Calu3 (cell line): ENCODE measurements at regions of chr13 and their contacts with region 1.

Region 1: GRCh38 chr13:45047394-45048310 is 58.3 kb downstream of the GPALPP1 start:
- DNase-seq: peak; percentile 72
- H3K4me3 Mint-ChIP-seq: peak overlapping the region; percentile 50
- H3K27ac Mint-ChIP-seq: no peak overlapping the region
- H3K4me1 Mint-ChIP-seq: peaks cover 6% of the 10 kb centered on the region
- H3K27me3 Mint-ChIP-seq: no peaks in the 10 kb centered on the region
- CTCF ChIP-seq: peak; percentile 56

Region 2: GRCh38 chr13:44988973-44989817 is 58.5 kb before region 1 on chr13 and contains the starts of genes GPALPP1 and NUFIP1:
- CTCF ChIA-PET with region 1: no interaction called
- intact Hi-C with region 1: no loop called
- DNase-seq: peak; percentile 83
- H3K4me3 Mint-ChIP-seq: peak within 1 kb of the TSS; percentile 99
- H3K27ac Mint-ChIP-seq: peak within 1 kb of the TSS; percentile 99
- H3K4me1 Mint-ChIP-seq: peaks cover 21% of the 10 kb centered on the region
- H3K27me3 Mint-ChIP-seq: no peaks in the 10 kb centered on the region
- CTCF ChIP-seq: no peak
- total RNA-seq, gene GPALPP1: 21.7 and 23.1 TPM in 2 replicates
- total RNA-seq, gene NUFIP1: 6.6 TPM in 2 replicates

Region 3: DNA sequence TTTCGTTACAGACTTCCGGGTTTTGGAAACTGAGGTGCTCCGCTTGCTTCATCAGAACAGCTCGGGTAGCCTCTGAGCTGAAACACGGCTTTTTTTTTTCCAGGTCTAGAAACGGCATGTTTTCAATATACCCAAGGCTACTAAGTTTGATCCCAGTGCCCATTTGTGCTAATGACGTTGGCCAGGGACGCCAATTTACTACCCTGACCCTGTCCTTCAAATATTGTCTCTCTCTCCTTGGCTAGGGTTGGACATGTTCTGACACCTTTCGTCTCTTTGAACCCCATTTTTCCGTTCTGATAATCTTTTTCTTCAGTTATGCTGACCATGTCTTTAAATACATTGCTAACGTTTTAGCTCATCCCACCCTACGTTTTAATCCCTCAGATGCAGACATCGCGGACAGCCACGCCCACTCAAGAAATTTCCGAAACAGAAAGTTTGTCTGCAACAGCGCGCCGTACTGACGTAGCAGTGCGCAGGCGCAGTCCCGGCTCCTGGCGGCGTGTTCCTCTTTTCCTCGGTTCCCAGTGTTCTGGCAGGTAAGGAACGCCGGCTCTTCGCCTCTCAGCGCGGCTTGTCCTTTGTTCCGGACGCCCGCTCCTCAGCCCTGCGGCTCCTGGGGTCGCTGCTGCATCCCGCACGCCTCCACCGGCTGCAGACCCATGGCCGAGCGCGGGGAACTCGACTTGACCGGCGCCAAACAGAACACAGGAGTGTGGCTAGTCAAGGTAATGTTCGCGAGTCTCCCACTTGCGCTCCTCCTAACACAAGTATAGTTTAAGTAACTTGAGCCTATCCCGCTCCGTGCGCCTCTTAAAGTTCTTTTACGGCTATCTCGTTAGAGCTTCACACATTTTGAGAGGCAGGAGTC is 72.6 kb after region 1 on chr13 and contains the start of gene GTF2F2:
- CTCF ChIA-PET with region 1: no interaction called
- intact Hi-C with region 1: loop called (anchors 5 kb)
- DNase-seq: peak; percentile 86
- H3K4me3 Mint-ChIP-seq: no peak within 1 kb of the TSS
- H3K27ac Mint-ChIP-seq: no peak within 1 kb of the TSS
- H3K4me1 Mint-ChIP-seq: no peaks in the 10 kb centered on the region
- H3K27me3 Mint-ChIP-seq: no peaks in the 10 kb centered on the region
- CTCF ChIP-seq: no peak
- total RNA-seq, gene GTF2F2: 21.1 and 23.9 TPM in 2 replicates

Region 4: DNA sequence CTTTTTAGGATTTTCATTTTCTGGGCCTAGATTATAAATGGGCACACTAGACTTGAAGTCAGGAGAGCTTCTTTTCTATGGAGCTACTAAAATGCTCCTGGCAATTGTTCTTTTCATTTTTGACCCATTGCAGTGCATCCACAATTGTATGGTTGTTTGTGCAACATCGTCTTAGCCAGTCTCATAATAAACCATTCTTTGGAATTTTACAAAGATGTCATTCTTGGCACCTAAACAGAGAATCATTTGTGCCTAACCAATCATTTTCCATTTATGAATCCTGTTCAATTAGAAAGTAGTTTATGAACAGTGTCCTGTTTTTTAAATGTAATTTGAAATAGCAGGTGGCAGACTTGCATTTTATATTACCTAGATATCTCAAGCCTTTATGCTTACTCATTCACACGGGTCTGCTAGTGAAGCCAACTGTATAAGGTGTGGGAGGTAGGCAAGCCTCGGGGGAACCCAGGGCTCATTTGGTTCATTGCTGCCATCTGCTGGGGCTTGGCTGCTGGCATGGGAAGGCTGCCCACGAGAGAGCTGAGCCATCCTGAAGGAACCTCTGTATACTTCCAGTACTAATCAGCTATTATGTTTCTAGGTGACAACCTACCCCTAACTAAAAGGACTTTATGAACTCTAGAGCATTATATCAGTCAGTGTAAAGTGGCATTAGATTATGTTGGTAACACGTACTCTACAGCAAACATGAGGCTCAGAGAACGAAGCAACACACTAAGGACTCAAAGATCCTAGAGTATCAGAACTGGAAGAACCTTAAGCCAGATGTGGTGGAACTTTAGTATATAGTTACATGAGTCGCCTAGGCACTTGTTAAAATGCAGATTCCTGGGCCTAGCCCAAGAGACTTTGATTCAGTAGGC is 233.3 kb after region 1 on chr13:
- CTCF ChIA-PET with region 1: interaction called, 26 read pairs
- intact Hi-C with region 1: loop called (anchors 1 kb)
- DNase-seq: peak; percentile 77
- H3K4me3 Mint-ChIP-seq: no peak overlapping the region
- H3K27ac Mint-ChIP-seq: no peak overlapping the region
- H3K4me1 Mint-ChIP-seq: no peaks in the 10 kb centered on the region
- H3K27me3 Mint-ChIP-seq: no peaks in the 10 kb centered on the region
- CTCF ChIP-seq: peak; percentile 60

Region 5: DNA sequence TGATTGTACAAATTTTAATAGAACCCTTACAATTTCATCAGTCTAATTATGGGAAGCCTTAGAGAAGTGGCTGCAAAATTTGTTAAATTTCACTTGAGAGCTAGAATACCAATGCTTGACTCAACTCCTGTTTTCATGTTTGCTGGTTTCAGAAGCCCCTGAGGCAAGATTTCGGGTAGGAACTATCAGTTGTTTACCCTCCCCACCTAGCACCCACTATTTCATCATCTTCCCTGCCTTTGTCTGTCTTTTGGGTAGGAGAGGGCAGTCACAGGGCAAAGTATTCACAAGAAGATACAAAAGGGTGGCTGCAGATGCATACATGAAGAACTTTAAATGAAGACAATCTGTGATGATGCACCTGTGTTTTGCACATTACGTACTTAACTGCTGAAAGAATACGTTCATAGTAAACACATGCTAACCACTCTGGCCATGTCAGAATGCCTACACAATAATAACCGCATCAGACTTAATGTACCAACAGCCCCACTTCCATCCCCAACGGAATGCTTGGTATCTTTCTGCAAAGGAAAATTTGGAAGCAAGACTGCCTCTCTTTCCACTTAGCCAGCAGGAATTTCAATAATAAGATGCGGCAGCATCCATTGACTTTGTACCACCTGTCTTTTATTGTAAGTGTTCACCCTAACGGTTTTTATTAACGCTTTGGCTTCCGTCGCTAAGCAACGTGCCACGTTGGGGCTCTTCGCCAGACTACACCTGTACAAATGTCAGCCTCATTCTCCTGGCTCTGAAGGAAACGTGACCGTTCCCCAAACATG is 262.9 kb after region 1 on chr13:
- CTCF ChIA-PET with region 1: no interaction called
- intact Hi-C with region 1: loop called (anchors 1 kb)
- DNase-seq: no peak
- H3K4me3 Mint-ChIP-seq: peak overlapping the region; percentile 68
- H3K27ac Mint-ChIP-seq: no peak overlapping the region
- H3K4me1 Mint-ChIP-seq: peaks cover 10% of the 10 kb centered on the region
- H3K27me3 Mint-ChIP-seq: no peaks in the 10 kb centered on the region
- CTCF ChIP-seq: no peak

Region 6: GRCh38 chr13:45320876-45321629 is 273.4 kb after region 1 on chr13:
- CTCF ChIA-PET with region 1: no interaction called
- intact Hi-C with region 1: no loop called
- DNase-seq: no peak
- H3K4me3 Mint-ChIP-seq: no peak overlapping the region
- H3K27ac Mint-ChIP-seq: no peak overlapping the region
- H3K4me1 Mint-ChIP-seq: peaks cover 6% of the 10 kb centered on the region
- H3K27me3 Mint-ChIP-seq: no peaks in the 10 kb centered on the region
- CTCF ChIP-seq: no peak

Region 7: DNA sequence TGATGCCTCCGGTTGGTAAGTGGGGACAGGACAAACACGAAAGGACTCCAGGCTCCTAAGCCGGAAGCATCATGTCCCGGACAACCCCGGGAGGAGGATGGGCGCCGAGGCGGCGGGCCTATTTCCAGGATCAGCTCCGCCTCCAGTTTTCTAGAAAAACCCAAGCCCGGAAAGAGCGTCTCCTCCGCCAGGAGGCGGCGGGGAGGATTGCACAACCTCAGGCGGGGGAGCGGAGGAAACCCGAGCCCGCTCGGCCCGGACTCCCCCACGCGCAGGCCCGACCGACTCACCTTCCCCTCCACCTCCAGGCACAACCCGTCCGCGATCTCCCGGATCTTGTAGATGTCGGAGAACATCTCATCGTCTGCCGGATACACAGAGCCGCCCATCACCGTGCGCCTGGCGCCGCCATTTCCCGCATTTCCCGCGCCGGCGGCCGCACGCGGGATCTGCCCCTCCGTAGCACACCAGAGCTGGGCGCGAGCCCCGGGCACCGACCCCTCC is 292.8 kb after region 1 on chr13:
- CTCF ChIA-PET with region 1: no interaction called
- intact Hi-C with region 1: no loop called
- DNase-seq: peak; percentile 91
- H3K4me3 Mint-ChIP-seq: peak overlapping the region; percentile 95
- H3K27ac Mint-ChIP-seq: peak overlapping the region; percentile 87
- H3K4me1 Mint-ChIP-seq: peaks cover 29% of the 10 kb centered on the region
- H3K27me3 Mint-ChIP-seq: no peaks in the 10 kb centered on the region
- CTCF ChIP-seq: no peak

Region 8: GRCh38 chr13:45393941-45394570 is 346.4 kb after region 1 on chr13:
- CTCF ChIA-PET with region 1: no interaction called
- intact Hi-C with region 1: loop called (anchors 10 kb)
- DNase-seq: peak; percentile 57
- H3K4me3 Mint-ChIP-seq: no peak overlapping the region
- H3K27ac Mint-ChIP-seq: no peak overlapping the region
- H3K4me1 Mint-ChIP-seq: no peaks in the 10 kb centered on the region
- H3K27me3 Mint-ChIP-seq: no peaks in the 10 kb centered on the region
- CTCF ChIP-seq: peak; percentile 57